ENCODE measurements at regions of chr6 and their contacts with region 1.

Region 1: DNA sequence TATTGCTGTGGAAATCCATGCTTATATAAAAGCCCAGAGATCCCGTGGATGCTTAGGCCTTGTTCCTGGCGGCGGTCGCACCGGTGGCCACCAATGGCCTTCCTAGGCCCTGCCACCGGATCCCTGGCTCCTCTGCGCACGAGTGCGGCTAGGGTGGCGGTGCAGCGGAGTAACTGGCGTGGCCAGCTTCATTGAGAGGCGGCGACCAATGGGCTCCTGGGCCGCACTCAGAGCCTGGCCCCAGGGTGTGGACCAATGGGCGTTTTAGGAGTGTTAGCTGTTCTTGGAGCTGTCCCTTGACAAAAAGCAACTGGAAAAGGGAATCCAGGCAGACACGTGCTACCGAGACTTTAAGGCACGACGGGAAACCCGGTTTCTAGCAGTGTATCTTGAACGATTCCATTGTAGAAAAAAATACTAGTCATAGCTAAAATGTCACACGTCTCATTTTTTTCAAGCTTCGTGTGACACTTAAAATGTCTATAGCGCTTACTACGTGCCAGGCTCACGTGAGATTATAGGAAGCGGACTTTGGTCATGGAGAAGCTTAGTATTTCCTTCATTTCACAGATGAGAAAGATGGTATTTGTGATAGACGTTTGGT is 1.7 kb downstream of the AMD1 start:
- DNase-seq: peak; percentile 88 to 92
- H3K4me3 ChIP-seq: peak overlapping the region; percentile 85
- H3K4me1 ChIP-seq: peaks cover 32% of the 10 kb centered on the region
- H3K27me3 ChIP-seq: no peaks in the 10 kb centered on the region

Region 2: GRCh38 chr6:110523451-110524021 is 352.7 kb before region 1 on chr6:
- in situ Hi-C with region 1: loop called (anchors 5 kb)
- DNase-seq: no peak
- H3K4me3 ChIP-seq: no peak overlapping the region
- H3K4me1 ChIP-seq: peaks cover 15% of the 10 kb centered on the region; the same call in 1 of the 2 replicates
- H3K27me3 ChIP-seq: no peaks in the 10 kb centered on the region; the same call in 1 of the 2 replicates

Region 3: DNA sequence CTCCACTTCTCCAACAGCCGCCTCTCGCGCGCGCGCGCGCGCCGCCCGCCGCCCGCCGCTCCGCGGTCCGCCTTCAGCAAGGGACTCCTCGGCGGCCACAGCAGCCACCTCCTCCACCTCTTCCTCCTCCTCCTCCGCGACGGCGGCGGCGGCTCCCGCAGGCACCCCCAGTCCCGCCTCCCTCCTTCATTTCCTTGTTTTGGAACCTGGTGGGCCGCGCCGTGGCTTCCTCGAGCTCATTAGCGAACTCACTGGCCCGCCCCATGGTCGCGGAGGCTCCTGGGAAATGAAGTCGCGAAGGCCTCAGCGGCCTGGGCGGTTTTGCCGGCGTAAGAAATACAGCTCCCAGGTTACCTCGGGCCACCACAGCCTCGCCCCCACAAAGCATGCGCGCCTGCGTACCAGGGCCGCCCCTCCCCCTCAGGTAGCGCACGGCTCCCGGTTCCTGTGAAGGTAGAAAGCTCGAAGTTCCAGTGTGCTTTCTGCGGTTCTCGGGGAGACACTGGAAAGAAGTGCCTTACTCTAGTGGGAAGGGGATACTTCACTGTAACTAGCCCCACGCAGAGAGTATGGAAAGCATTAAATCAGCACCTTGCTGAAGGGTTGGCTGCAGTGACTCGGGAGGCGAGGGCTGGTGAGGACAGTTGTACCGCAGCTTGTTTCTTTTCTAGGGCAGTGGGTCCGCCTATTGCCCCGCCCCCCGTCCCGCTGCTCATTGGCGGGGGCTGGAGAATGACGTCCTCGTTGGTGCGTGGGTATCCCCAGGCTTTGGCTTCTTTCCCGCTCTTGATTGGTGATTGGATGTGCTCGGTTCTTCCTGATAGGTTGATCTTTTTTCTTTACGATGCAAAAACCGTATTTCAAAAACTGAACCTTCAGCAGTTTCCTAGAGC is 60.8 kb before region 1 on chr6 and contains the start of gene CDK19:
- in situ Hi-C with region 1: loop called (anchors 5 kb)
- DNase-seq: peak; percentile 98
- H3K4me3 ChIP-seq: peak within 1 kb of the TSS; percentile 77
- H3K4me1 ChIP-seq: peaks cover 15% of the 10 kb centered on the region
- H3K27me3 ChIP-seq: no peaks in the 10 kb centered on the region